ENCODE measurements at regions of chr1 and their contacts with region 1.

Region 1: GRCh38 chr1:53889304-53890298 is at the start of gene YIPF1:
- DNase-seq: peak; percentile 83 to 85
- H3K4me3 ChIP-seq: peak within 1 kb of the TSS; percentile 69
- H3K4me3 Mint-ChIP-seq: peak within 1 kb of the TSS; percentile 93
- H3K27ac Mint-ChIP-seq: peak within 1 kb of the TSS; percentile 89
- H3K4me1 ChIP-seq: peaks cover 20% of the 10 kb centered on the region
- H3K4me1 Mint-ChIP-seq: peaks cover 9% of the 10 kb centered on the region
- H3K27me3 ChIP-seq: no peaks in the 10 kb centered on the region
- H3K27me3 Mint-ChIP-seq: no peaks in the 10 kb centered on the region
- CTCF ChIP-seq: no peak
- total RNA-seq, gene YIPF1: 16.6 and 17.2 TPM in 2 replicates

Region 2: DNA sequence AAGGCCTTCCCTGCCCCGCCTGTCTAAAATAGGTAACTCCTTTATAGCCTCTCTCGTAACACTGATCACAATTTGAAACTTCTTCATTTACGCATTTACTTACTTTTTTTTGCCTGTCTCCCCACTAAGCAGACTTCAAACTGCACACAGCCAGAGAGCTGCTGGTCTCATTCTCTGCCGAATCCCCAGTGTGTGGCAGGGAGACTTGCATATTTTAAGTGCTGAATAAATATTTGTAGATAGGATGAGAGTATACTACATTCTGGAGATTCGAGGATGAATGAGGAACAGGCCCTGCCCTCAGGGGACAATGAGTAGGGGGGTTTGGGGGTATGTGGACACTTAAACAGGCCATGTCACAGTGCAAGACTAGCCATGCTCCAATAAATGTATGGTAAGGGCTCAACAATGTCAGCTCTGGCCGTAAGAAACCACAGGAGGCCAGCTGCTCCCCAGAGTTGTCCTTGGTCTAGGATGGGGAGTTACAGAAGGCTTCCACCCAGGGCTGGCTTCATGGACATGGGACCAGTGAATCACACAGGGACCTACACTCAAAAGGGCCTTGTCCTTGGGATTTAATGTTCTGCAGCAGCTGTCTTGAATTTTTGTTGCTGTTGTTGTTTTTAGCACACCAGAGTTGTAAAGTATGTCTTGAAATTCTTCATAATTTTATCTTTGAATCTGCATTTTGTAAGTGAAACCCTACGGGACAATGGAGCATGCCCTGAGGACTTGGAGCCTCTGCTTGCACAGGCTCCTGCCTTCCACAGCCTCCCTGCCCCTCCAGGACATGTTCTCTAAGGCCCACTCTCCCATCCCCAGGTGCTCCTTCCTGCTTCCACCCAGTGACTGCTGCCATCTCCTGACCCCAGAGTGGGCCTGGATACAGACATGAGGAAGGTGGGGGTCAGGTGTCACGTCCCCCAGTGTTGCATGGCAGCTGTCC is 12.9 kb after region 1 on chr1:
- CTCF ChIA-PET with region 1: no interaction called
- POLR2A ChIA-PET with region 1: no interaction called
- intact Hi-C with region 1: loop called (anchors 2 kb)
- DNase-seq: peak; percentile 37 to 51
- H3K4me3 ChIP-seq: no peak overlapping the region
- H3K4me3 Mint-ChIP-seq: peak overlapping the region; percentile 45
- H3K27ac Mint-ChIP-seq: peak overlapping the region; percentile 77
- H3K4me1 ChIP-seq: peaks cover 34% of the 10 kb centered on the region
- H3K4me1 Mint-ChIP-seq: peaks cover 20% of the 10 kb centered on the region
- H3K27me3 ChIP-seq: no peaks in the 10 kb centered on the region
- H3K27me3 Mint-ChIP-seq: no peaks in the 10 kb centered on the region
- CTCF ChIP-seq: no peak

Region 3: GRCh38 chr1:53913352-53914033 is 23.9 kb after region 1 on chr1:
- CTCF ChIA-PET with region 1: no interaction called
- POLR2A ChIA-PET with region 1: no interaction called
- intact Hi-C with region 1: loop called (anchors 1 kb)
- DNase-seq: no peak
- H3K4me3 ChIP-seq: no peak overlapping the region
- H3K4me3 Mint-ChIP-seq: no peak overlapping the region
- H3K27ac Mint-ChIP-seq: peak overlapping the region; percentile 46
- H3K4me1 ChIP-seq: peaks cover 41% of the 10 kb centered on the region
- H3K4me1 Mint-ChIP-seq: peaks cover 25% of the 10 kb centered on the region
- H3K27me3 ChIP-seq: no peaks in the 10 kb centered on the region
- H3K27me3 Mint-ChIP-seq: no peaks in the 10 kb centered on the region
- CTCF ChIP-seq: no peak